HEK293T (cell line): ENCODE measurements at regions of chr1 and their contacts with region 1.

Region 1: GRCh38 chr1:35930593-35931445 is at the start of gene AGO3:
- DNase-seq: peak; percentile 84

Region 2: GRCh38 chr1:35882945-35883634 is 47.7 kb before region 1 on chr1 and contains the start of gene AGO1:
- CTCF ChIA-PET with region 1: no interaction called
- POLR2A ChIA-PET with region 1: interaction called, 10 read pairs
- DNase-seq: peak; percentile 100

Region 3: GRCh38 chr1:35915693-35916092 is 15.1 kb before region 1 on chr1:
- CTCF ChIA-PET with region 1: no interaction called
- POLR2A ChIA-PET with region 1: interaction called, 13 read pairs
- DNase-seq: no peak

Region 4: DNA sequence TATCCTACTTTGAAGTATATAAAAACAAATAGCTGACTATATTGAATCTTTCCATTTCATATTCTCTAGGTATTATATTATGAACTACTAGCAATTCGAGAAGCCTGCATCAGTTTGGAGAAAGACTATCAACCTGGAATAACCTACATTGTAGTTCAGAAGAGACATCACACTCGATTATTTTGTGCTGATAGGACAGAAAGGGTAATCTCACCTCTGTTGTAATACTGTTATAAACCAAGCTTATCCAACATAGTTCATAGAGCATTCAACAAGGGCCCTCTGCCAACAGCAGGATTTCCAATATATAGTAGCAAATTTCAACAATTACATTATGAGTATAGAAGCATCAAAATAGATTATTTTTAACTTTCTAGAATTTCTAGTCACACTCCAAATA is 109.4 kb after region 1 on chr1:
- CTCF ChIA-PET with region 1: no interaction called
- POLR2A ChIA-PET with region 1: no interaction called
- DNase-seq: no peak